Motor neuron (in vitro differentiated cells): ENCODE measurements at regions of chr20 and their contacts with region 1.

Region 1: GRCh38 chr20:8756410-8756809 is 312.5 kb upstream of the PLCB4 start:
- ATAC-seq: peak in 7 of 8 experiments; percentile 88 to 99 (median 92)
- H3K4me3 ChIP-seq: no peak overlapping the region
- H3K27ac ChIP-seq: no peak overlapping the region
- H3K4me1 ChIP-seq: peaks cover 0 to 5% of the 10 kb centered on the region in 2 donors

Region 2: DNA sequence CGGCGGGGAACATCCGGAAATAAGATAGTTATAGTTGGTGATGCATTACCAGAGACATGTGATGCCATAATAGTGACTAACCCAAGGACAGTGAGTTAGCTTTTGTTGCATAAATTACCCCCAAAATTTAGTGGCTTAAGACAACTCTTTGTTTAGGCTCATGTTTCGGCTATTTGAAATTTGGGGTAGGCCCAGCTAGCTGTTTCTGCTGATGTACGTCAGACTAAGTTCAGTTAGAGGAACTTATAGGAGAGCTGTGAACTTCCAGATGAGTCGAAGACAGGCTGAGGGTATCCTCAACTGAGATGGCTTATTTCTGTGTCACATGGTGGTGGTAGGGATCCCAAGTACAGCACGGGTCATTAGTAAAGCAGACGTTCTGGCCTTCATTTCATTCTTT is 257.8 kb before region 1 on chr20:
- in situ Hi-C with region 1: no loop called
- ATAC-seq: no peak
- H3K4me3 ChIP-seq: no peak overlapping the region
- H3K27ac ChIP-seq: no peak overlapping the region
- H3K4me1 ChIP-seq: no peaks in the 10 kb centered on the region

Region 3: DNA sequence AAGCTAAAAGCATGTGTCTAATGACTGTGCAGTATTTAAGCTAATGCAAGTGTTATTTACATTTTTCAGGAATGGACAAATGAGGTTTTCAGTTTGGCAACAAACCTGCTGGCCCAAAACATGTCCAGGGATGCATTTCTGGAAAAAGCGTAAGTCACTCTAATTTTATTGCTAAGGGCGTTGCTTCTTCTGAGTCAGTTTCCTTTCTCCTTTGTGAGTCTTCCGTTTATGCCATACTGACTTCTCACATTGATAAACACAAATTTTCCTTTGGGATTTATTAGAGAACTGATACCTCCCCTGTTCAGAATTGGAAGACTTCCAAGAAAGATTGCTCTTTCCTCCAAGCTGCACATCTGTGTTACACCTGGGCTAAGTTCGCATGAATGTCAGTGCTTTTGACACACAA is 110.4 kb before region 1 on chr20:
- in situ Hi-C with region 1: no loop called
- ATAC-seq: peak in 3 of 8 experiments; percentile 79 to 88 (median 80)
- H3K4me3 ChIP-seq: no peak overlapping the region
- H3K27ac ChIP-seq: no peak overlapping the region
- H3K4me1 ChIP-seq: no peaks in the 10 kb centered on the region

Region 4: DNA sequence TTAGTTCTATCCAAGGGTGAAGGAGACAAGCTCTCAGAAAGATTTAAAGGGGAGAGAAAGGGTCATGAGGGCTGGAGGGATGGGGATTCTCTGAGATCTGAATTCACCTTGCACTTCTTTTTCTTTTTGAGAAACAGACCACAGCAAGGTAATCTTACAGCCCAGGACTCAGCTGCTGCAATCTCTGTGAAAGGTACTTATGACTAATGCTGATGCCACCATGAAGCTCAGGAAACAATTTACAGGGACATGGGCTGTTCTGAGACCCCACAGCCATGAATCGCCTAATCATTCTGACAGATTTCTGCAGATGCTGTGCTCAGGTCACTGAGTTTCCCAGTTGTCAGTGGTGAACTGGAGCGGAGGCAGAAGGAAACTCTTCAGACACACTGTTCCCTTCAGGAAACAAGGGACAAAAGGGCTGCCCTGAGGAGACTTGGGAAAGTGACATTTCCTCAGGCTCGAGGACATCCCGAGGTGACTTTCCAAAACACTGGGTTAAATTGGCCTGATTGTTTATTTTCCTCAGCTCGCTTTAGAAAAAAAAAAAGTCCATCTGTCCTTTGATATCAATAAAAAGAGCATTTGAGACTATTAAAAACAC is 208.7 kb after region 1 on chr20:
- in situ Hi-C with region 1: no loop called
- ATAC-seq: peak in 4 of 8 experiments; percentile 24 to 62 (median 32)
- H3K4me3 ChIP-seq: no peak overlapping the region
- H3K27ac ChIP-seq: no peak overlapping the region
- H3K4me1 ChIP-seq: no peaks in the 10 kb centered on the region

Region 5: DNA sequence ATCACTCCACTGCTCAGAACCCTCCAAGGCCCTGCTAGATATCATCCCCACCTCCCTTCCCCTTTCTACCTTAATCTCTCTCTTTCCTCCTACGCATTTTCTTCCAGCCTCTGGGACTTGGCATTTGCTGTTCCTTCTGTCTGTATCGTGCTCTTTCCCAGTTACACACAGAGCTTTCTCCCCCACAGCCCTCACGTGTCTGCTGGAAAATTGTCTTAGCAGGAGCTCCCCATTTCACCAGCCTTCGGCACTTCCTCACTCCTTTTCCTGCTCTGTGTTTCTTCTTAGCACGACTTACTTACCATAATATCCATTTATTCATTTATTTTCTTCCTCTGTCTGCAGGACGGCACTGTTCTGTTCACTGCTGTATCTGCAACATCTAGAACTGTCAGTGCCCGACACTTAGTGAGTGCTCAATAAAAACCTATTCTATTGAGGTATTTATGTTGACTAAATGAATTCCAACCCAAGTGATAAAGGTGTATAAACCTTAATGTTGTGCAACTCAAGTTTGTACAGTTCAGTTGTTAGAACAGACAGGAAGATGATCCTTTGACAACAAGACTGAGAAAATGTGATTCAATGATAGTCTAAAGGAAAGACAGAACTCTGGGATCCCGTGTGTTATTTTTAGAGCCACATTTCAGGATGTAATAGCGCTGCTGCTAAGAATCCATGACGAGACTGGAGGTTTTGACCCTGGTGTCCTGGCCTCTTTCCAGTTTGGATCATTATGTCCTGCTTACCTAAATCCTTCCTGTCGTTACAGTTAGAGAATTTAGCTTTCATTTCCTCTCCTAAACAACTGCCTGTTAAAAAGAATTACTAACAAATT is 587.9 kb after region 1 on chr20:
- in situ Hi-C with region 1: loop called in 1 of 9 experiments (anchors 25 kb)
- ATAC-seq: peak in 2 of 8 experiments; percentile 18 to 87
- H3K4me3 ChIP-seq: no peak overlapping the region
- H3K27ac ChIP-seq: no peak overlapping the region
- H3K4me1 ChIP-seq: no peaks in the 10 kb centered on the region

Region 6: DNA sequence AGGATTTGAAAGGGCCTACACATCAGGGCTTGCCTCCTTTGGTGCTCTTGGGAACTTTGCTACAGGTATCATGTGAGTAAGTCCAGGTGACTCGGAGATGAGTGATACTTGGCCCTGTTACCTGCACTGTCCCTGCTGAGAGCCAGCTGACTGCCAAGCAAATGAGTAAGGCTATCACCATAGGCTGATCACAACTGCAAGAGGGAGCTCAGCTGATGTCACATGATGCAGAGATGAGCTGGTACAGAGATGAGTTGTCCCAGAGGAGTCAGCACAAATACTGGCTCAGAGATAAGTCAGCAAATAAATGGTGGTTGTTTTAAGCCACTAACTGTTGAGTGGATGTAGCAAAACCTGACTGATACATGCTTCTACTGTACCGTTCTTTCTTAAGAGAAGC is 799.4 kb after region 1 on chr20:
- in situ Hi-C with region 1: loop called in 1 of 9 experiments (anchors 25 kb)
- ATAC-seq: peak in 5 of 8 experiments; percentile 62 to 93 (median 89)
- H3K4me3 ChIP-seq: no peak overlapping the region
- H3K27ac ChIP-seq: no peak overlapping the region
- H3K4me1 ChIP-seq: no peaks in the 10 kb centered on the region

Region 7: DNA sequence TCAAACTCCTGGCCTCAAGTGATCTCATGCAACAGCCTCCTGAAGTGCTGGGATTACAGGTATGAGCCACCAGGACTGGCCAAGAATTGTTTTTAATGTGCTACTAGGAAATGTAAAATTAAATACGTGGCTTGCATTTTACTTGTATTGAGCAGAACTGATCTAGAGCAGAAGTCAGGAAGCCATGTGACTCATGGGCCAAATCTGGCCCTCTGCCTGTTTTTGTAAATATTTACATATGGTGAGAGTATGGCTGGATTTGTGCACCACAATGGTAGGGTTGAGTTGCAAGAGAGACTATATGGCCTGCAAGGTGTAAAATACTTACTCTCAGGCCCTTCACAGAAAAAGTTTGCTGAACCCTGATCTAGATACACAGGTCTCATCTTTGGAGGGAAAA is 833.8 kb after region 1 on chr20:
- in situ Hi-C with region 1: loop called in 1 of 9 experiments (anchors 25 kb)
- ATAC-seq: peak in 3 of 8 experiments; percentile 58 to 97 (median 92)
- H3K4me3 ChIP-seq: no peak overlapping the region
- H3K27ac ChIP-seq: no peak overlapping the region
- H3K4me1 ChIP-seq: peaks cover 17 to 57% of the 10 kb centered on the region in 2 donors